ENCODE measurements at regions of chr6 and their contacts with region 1.

Region 1: GRCh38 chr6:36241728-36242127 is 28.1 kb upstream of the PNPLA1 start:
- DNase-seq: no peak
- ATAC-seq: peak in 1 of 4 experiments; percentile 28
- H3K4me3 ChIP-seq: no peak overlapping the region
- H3K4me3 Mint-ChIP-seq: no peak overlapping the region
- H3K27ac ChIP-seq: no peak overlapping the region
- H3K27ac Mint-ChIP-seq: no peak overlapping the region
- H3K4me1 ChIP-seq: peaks cover 3 to 4% of the 10 kb centered on the region in 2 experiments
- H3K4me1 Mint-ChIP-seq: peaks cover 11 to 16% (median 13%) of the 10 kb centered on the region in 3 donors
- H3K27me3 ChIP-seq: no peaks in the 10 kb centered on the region
- H3K27me3 Mint-ChIP-seq: peaks cover 4 to 5% of the 10 kb centered on the region in 2 donors

Region 2: DNA sequence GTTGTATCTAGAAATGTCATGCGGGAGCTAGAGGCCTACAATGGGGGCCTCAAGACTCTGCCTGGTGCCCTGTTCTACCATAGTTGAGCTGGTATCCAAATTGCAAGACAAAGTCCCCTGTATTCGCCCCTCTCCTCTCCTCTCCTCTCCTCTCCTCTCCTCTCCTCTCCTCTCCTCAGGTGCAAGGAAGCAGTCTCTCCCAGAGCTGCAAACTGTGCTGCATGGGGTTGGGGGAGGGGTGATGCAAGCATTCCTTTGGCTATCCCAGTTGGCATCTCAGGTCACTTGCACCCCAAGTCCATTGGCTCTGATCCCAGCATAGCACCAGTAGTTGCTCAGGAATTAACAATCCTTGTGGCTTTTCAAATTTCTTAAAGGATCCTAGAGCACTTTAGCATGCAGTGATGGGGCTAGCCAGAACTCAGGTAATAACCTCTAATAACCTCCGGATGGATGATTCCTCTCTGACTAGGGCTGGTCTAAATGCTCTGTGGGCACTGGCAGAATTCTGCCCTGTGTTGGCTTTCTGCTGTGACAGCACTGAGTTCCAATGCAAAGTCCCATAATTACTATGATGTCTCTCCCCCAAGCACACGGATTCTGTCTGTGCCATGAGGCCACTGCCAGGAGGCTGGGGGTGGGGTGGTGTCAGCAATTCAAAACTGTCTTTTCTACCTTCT is 1389.2 kb before region 1 on chr6:
- CTCF ChIA-PET with region 1: no interaction called
- POLR2A ChIA-PET with region 1: interaction called in 1 of 2 experiments, 10 read pairs
- DNase-seq: no peak
- ATAC-seq: no peak
- H3K4me3 ChIP-seq: no peak overlapping the region
- H3K4me3 Mint-ChIP-seq: no peak overlapping the region
- H3K27ac ChIP-seq: no peak overlapping the region
- H3K27ac Mint-ChIP-seq: no peak overlapping the region
- H3K4me1 ChIP-seq: no peaks in the 10 kb centered on the region
- H3K4me1 Mint-ChIP-seq: peaks cover 0 to 2% (median 0%) of the 10 kb centered on the region in 3 donors
- H3K27me3 ChIP-seq: no peaks in the 10 kb centered on the region
- H3K27me3 Mint-ChIP-seq: no peaks in the 10 kb centered on the region